Colonic mucosa (tissue), 4 donors: ENCODE measurements at regions of chr12 and their contacts with region 1.

Region 1: DNA sequence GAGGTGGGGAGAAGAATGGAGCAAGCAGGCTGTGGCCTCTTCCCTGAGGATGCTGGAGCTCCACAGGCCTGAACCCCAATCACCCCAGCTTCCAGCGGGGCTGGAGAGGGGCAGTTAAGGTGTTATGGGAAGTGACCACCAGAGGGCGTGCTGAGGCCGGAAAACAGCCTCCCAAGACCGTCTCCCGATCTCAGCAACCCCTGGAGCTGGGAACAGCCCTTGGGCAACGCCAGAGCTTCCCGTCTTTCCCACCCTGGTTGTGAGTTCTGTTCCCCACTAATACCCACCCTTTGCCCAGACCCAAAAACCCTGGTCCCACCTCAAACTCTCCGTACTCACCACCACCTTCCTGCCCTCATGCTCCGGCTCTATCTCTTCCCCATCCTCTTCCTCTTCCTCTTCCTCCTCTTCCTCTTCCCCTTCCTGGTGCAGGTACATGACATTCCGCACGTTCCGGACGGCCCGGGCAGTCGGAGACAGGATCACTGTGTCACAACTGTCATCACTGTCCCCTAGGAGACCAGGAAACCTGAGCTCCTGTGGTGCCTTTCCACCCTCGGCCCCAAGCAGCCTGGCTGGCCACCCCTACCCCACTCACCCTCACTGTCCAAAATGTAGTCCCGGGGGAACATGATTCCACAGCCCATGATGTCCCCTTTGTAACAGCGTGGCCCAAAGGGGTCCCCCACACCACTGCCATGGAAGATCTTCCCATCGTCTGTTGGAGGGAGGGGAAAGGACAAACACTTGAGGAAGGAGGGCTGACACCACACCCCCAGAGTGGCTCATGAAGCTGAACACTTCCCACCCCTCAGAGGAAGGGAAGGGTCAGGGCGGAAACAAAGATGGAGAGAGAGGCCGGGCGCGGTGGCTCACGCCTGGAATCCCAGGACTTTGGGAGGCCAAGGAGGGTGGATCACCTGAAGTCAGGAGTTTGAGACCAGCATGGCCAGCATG is 12.9 kb downstream of the SPRYD3 start:
- DNase-seq: peak; percentile 82
- H3K4me3 ChIP-seq: no peak overlapping the region
- H3K27ac ChIP-seq: no peak overlapping the region
- H3K4me1 ChIP-seq: peaks cover 3% of the 10 kb centered on the region
- H3K27me3 ChIP-seq: no peaks in the 10 kb centered on the region
- CTCF ChIP-seq: peak; percentile 85

Region 2: DNA sequence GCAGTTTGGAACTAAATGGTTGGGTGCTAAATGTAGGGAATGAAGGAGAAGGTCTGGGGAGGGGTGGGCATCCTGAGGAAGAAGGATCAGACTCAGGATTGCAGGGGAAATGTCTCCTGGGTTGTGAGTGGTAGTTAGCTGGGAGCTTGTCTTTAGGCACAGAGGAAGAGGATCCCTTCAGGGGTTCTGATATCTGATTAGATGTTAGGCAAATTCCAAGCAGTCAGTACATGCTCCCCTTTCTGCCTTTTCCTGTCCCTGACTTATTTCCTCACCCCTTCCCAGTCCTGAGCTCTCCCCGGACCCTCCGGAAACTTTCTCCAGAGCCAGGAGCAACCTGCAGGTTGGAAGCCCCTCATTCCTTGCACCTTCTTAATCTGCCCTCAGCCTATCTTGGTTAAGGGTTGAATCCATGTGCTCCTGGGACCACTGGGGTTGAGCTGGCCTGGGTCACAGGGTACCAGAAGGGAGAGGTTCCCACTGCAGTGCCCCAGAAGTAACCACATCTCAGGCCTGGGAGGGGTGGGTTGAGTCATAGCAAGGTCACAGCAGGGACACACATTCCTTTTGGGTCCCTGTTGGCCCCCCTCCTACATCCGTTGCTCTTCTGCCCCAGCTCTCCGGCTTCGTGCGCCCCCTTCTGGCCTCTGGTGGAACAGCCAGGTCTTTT is 32.9 kb after region 1 on chr12:
- intact Hi-C with region 1: loop called (anchors 2 kb)
- DNase-seq: peak; percentile 90
- H3K4me3 ChIP-seq: no peak overlapping the region
- H3K27ac ChIP-seq: peak overlapping the region; percentile 69
- H3K4me1 ChIP-seq: peaks cover 18% of the 10 kb centered on the region
- H3K27me3 ChIP-seq: no peaks in the 10 kb centered on the region
- CTCF ChIP-seq: peak; percentile 96

Region 3: GRCh38 chr12:53198486-53199110 is 132.3 kb after region 1 on chr12:
- intact Hi-C with region 1: loop called (anchors 5 kb)
- DNase-seq: no peak
- H3K4me3 ChIP-seq: no peak overlapping the region
- H3K27ac ChIP-seq: no peak overlapping the region
- H3K4me1 ChIP-seq: peaks cover 15% of the 10 kb centered on the region
- H3K27me3 ChIP-seq: no peaks in the 10 kb centered on the region
- CTCF ChIP-seq: no peak

Region 4: DNA sequence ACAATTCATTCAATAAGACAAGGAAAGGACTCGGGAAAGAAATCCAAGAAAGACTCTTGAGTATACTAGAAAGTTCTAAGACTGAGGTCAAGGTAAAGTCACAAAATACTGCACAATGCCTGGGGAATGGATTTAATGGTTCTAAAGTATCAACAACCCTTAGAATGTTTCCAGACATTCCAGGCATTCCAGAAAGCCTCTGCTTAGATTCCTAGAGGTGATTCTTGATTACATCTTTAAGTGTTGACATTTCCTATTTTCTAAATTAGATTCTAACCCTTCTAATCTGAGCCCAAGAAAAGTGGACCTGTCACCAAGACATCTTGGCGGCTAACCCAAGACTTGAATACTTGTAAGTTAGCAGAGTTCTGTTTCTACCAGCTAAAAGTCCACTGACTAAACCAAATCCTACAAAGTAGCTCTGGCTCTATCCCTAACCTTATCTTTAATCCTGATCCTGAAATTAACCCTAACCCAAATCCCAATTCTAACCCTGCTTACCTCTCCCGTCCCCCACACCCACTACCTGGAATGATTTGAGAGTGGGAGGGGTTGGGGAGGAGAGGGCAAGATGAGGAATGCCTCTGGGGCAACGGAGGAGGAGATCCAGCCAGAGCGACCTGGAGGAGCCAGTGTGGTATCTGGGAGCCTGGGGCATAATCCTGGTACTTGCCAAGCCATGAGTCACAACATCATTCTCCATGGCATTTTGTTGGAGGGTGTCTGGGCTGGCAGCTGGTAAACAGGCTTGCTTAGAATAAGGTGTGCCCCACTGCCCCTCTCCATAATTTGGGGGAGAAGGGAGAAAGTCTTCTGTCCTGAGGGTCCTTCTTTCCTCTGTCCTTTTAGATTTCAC is 779.0 kb after region 1 on chr12:
- intact Hi-C with region 1: no loop called
- DNase-seq: no peak
- H3K4me3 ChIP-seq: no peak overlapping the region
- H3K27ac ChIP-seq: no peak overlapping the region
- H3K4me1 ChIP-seq: no peaks in the 10 kb centered on the region
- H3K27me3 ChIP-seq: peaks cover 3% of the 10 kb centered on the region
- CTCF ChIP-seq: no peak